Endothelial cell of umbilical vein (primary cell): ENCODE measurements at regions of chr11 and their contacts with region 1.

Region 1: DNA sequence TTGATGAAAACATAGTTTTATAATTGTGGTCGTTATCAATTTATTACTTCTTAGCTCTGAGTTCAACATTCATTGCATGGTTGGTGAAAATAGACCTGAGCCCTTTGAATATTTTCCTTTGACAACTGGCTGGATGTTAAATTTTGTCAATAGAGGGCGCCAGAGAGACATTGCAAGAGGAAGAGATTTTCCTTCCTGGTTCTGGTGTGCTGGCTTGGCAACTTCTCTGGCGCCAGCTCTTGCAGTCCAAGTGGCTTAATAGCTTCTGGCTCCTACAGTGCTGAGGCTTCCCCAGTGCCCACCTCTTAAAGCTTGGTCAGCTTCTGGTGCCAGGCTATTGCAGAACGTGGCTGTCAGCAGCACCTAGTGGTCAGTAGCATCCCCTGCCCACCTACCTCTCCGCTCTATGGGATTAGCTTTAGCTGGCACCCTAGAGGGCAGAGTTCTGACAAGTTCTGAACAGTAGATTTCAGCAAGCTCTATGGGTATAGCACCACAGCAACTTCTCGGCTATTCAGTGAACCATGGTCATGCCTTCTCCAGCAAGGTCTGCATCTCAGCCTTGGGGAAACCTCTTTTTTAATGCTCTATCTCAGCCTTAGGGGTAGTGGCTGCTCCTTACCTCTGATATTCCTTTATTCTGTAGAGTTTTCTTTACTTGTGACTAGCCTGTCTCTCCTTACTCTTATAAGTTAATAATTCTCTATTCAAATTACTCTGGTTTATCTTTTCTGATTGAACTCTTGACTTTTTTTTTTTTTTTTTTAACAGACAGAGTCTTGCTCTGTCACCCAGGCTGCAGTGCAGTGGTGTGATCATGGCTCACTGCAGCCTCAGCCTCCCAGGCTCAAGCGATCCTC is 59.4 kb downstream of the ACER3 start:
- DNase-seq: peak; percentile 77
- H3K4me3 ChIP-seq: no peak overlapping the region
- H3K27ac ChIP-seq: no peak overlapping the region
- H3K4me1 ChIP-seq: peaks cover 7% of the 10 kb centered on the region
- H3K27me3 ChIP-seq: no peaks in the 10 kb centered on the region
- CTCF ChIP-seq: peak; percentile 70 to 77
- POLR2A ChIP-seq: no peak

Region 2: GRCh38 chr11:76615950-76616349 is 304.2 kb before region 1 on chr11:
- CTCF ChIA-PET with region 1: no interaction called
- POLR2A ChIA-PET with region 1: no interaction called
- dilution Hi-C with region 1: no loop called
- intact Hi-C with region 1: no loop called
- DNase-seq: peak; percentile 88
- H3K4me3 ChIP-seq: no peak overlapping the region
- H3K27ac ChIP-seq: peak overlapping the region; percentile 4
- H3K4me1 ChIP-seq: peaks cover 21% of the 10 kb centered on the region
- H3K27me3 ChIP-seq: no peaks in the 10 kb centered on the region
- CTCF ChIP-seq: no peak
- POLR2A ChIP-seq: no peak

Region 3: GRCh38 chr11:76721755-76722677 is 198.1 kb before region 1 on chr11:
- CTCF ChIA-PET with region 1: interaction called, 40 read pairs
- POLR2A ChIA-PET with region 1: no interaction called
- dilution Hi-C with region 1: no loop called
- intact Hi-C with region 1: no loop called
- DNase-seq: peak; percentile 77
- H3K4me3 ChIP-seq: no peak overlapping the region
- H3K27ac ChIP-seq: no peak overlapping the region
- H3K4me1 ChIP-seq: no peaks in the 10 kb centered on the region
- H3K27me3 ChIP-seq: peaks cover 20 to 24% of the 10 kb centered on the region in 2 experiments
- CTCF ChIP-seq: peak; percentile 92 to 95
- POLR2A ChIP-seq: no peak

Region 4: DNA sequence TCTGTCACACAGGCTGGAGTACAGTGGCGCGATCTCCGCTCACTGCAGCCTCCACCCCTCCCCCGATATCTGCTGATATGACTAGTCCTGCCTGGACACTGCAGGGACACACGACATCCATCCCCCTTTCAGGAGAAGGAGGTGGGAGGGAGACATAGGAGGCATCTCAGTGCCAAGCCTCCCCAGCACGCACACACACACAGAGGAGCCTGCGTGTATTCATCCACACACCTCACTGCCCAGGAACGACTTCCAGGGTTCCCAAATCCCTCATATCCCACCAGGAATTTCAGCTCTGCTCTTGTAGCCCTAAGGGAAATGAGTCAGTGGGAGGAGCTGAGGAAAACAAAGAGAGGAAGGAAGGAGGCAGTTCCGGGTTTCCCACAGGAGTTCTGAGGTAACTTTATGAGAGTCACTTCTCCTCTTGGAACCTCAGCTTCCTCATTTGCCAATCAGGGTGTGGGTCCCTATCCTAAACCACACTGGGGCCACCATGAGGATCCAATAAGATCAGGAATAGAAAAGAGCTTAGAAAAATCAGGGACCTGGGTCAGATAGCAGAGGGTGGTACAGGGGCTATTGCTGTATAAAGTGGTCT is 96.5 kb before region 1 on chr11:
- CTCF ChIA-PET with region 1: interaction called, 60 read pairs
- POLR2A ChIA-PET with region 1: no interaction called
- dilution Hi-C with region 1: loop called (anchors 25 kb)
- intact Hi-C with region 1: loop called (anchors 1 kb)
- DNase-seq: peak; percentile 97
- H3K4me3 ChIP-seq: peak overlapping the region in 2 of 3 experiments; percentile 25 to 55
- H3K27ac ChIP-seq: peak overlapping the region; percentile 99
- H3K4me1 ChIP-seq: peaks cover 31% of the 10 kb centered on the region
- H3K27me3 ChIP-seq: no peaks in the 10 kb centered on the region
- CTCF ChIP-seq: no peak
- POLR2A ChIP-seq: peak; percentile 68

Region 5: DNA sequence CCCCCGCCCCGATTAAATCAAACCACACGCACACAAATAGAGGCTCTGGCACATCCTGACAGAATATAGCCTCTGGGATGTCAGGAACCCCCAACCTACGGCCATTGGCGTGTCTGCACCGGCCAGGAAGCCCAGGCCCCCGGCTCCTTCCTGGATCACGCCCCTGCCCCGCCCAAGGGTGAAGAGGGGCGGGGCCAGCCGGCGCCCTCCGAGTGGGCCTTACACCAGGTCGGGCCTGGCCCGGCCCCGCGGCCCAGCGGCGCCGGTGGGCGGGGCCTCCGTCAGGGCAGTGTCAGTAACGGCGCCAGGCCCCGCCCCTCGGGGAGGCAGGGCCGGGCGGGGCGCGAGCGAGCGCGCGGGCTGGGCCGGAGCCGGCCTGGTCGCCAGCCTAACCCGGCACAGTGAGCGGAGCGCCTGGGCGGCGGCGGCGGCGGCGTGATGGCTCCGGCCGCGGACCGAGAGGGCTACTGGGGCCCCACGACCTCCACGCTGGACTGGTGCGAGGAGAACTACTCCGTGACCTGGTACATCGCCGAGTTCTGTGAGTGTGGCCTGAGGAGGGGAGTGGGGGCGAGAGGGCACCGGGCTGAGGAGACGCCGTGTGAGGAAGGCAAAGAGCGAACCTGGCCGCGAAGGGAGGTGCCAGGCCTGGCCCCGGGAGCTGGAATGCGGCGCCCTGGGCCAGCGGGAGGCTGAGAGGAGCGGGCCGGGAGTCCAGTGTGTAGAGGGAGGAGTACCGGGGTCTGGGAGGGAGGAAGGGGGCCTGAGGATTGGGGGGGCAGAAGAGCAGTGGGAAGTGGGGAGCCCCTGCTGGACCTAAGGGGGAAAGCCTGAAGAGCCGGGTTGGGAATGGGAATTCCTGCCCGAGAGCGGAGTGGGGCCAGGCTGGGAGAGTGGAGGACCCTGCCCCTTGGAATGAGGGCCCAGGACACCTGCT is 59.3 kb before region 1 on chr11 and contains the start of gene ACER3:
- CTCF ChIA-PET with region 1: interaction called, 60 read pairs
- POLR2A ChIA-PET with region 1: interaction called, 3 read pairs
- dilution Hi-C with region 1: no loop called
- intact Hi-C with region 1: loop called (anchors 1 kb)
- DNase-seq: peak; percentile 89
- H3K4me3 ChIP-seq: peak within 1 kb of the TSS; percentile 44 to 92 (median 62)
- H3K27ac ChIP-seq: peak within 1 kb of the TSS; percentile 77
- H3K4me1 ChIP-seq: peaks cover 13% of the 10 kb centered on the region
- H3K27me3 ChIP-seq: no peaks in the 10 kb centered on the region
- CTCF ChIP-seq: peak in 1 of 2 donors; percentile 51
- POLR2A ChIP-seq: peak; percentile 93
- total RNA-seq, gene ACER3: 22.4 and 31.6 TPM in 2 replicates

Region 6: GRCh38 chr11:76891278-76891677 is 28.8 kb before region 1 on chr11:
- CTCF ChIA-PET with region 1: interaction called, 71 read pairs
- POLR2A ChIA-PET with region 1: no interaction called
- dilution Hi-C with region 1: no loop called
- intact Hi-C with region 1: no loop called
- DNase-seq: peak; percentile 23
- H3K4me3 ChIP-seq: no peak overlapping the region
- H3K27ac ChIP-seq: no peak overlapping the region
- H3K4me1 ChIP-seq: peaks cover 27% of the 10 kb centered on the region
- H3K27me3 ChIP-seq: no peaks in the 10 kb centered on the region
- CTCF ChIP-seq: no peak
- POLR2A ChIP-seq: no peak

Region 7: DNA sequence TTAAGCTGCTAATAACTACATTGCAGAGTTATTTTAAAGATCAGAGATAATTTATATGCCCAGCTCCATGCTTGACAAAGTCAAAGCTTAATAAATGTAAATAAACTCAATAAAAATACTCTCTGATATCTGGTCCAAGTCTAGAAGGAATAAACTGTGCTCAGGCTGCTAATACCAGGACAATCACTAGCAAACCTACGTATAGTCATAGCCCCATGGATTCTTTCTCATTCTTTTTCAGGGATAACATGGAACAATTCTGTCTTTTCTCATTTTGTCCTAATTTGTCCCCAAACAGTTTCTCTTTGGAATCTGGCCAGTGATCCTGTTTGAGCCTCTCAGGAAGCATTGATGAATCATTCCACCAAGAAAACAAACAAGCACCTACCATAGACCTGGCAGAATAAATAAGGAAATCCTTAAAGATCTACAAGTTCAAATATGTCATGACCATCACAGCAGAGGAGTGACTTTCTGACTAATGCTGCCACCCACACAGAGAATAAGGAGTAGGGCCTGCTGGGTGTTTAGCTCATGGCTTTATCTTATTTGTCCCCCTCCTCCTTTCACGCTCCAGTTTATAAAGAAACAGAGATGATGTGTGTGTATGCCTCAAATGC is 100.0 kb after region 1 on chr11:
- CTCF ChIA-PET with region 1: interaction called, 14 read pairs
- POLR2A ChIA-PET with region 1: no interaction called
- dilution Hi-C with region 1: no loop called
- intact Hi-C with region 1: no loop called
- DNase-seq: peak; percentile 77
- H3K4me3 ChIP-seq: no peak overlapping the region
- H3K27ac ChIP-seq: no peak overlapping the region
- H3K4me1 ChIP-seq: peaks cover 20% of the 10 kb centered on the region
- H3K27me3 ChIP-seq: no peaks in the 10 kb centered on the region
- CTCF ChIP-seq: no peak
- POLR2A ChIP-seq: no peak

Region 8: DNA sequence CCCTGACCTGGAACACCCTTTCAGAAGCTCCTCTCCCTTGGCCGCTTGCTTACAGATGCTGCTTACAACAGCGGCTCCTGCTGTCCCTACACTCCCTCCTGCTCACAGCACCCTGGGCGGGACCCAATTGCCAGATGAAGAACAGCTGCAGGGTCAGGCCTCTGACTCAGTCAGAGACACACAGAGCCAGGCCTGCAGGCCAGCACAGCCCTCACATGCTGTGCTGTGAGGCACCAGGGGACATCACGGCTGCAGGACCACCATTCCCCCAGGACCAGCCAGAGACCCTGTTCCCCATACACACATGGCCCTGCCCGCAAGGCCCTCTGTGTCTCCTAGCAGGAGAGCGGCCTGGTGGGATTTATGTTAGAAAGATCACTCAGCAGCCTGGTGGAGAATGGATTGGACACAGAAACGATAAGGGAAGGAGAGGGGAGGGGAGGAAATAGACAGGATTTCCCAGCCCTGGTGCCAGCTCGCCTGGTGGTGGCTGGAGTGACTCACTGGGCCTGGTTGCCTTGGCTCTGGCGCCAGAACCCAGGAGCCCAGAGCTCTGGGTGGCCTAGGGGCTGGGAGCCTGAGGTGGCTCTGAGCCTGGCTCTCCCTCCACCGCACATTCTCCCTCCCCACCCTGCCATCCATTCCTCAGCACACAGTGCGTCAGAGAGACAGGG is 153.3 kb after region 1 on chr11:
- CTCF ChIA-PET with region 1: interaction called, 10 read pairs
- POLR2A ChIA-PET with region 1: no interaction called
- dilution Hi-C with region 1: no loop called
- intact Hi-C with region 1: no loop called
- DNase-seq: peak; percentile 88
- H3K4me3 ChIP-seq: no peak overlapping the region
- H3K27ac ChIP-seq: peak overlapping the region; percentile 80
- H3K4me1 ChIP-seq: peaks cover 30% of the 10 kb centered on the region
- H3K27me3 ChIP-seq: no peaks in the 10 kb centered on the region
- CTCF ChIP-seq: peak; percentile 28 to 46
- POLR2A ChIP-seq: no peak

Region 9: GRCh38 chr11:77351281-77351906 is 431.3 kb after region 1 on chr11:
- CTCF ChIA-PET with region 1: no interaction called
- POLR2A ChIA-PET with region 1: no interaction called
- dilution Hi-C with region 1: no loop called
- intact Hi-C with region 1: no loop called
- DNase-seq: no peak
- H3K4me3 ChIP-seq: no peak overlapping the region
- H3K27ac ChIP-seq: no peak overlapping the region
- H3K4me1 ChIP-seq: no peaks in the 10 kb centered on the region
- H3K27me3 ChIP-seq: no peaks in the 10 kb centered on the region
- CTCF ChIP-seq: no peak
- POLR2A ChIP-seq: no peak